Left ventricle myocardium superior (tissue), 1 donor: ENCODE measurements at regions of chr2 and their contacts with region 1.

Region 1: GRCh38 chr2:189096769-189097447 is 82.7 kb downstream of the COL5A2 start:
- DNase-seq: no peak
- ATAC-seq: no peak

Region 2: DNA sequence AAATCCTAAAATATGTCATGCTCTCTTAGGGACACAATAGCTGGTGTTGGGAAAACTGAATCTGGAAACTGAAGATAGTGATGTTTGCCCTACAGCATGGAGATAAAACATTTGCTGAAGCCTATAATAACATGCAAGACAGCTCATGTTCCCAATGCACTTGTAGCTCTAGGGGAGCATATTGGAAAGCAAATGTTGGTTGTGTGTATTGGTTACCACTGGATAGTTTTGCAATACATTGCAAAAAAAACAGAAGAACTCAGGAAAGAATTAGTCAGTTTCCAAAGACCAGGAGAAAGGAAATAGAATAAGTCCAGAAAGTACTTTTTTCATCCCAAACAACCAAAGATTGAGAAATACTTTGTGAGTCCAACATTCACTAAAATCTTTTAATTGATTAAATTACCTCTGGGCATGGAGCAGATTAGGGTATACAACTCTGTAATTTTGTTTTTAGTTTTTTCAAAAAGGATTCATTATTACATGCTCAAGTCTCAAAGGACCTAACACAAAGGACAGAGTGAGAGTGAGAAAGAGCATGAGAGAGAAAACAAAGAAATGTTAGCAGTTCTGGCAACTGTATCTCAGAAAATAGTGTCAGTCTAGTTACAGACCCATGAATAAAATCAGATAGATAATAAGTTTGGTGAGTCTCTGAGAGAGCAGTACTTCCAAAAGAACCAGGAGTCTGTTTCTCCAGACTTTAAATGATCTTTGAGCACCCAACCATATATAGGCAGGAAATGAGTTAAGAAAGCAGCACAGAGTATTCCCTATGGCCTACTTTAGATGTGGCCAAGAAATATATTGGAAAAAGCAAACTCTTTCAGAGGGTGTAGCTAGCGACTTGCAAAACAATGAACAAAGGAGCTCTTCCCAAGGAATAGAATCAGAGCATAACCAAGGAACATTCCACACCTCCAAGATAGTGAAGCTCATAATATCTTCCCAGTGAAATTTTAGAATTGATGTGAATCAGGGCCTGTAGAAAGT is 159.4 kb before region 1 on chr2:
- intact Hi-C with region 1: no loop called
- DNase-seq: no peak
- ATAC-seq: peak; percentile 86

Region 3: GRCh38 chr2:189164746-189165145 is 67.8 kb after region 1 on chr2:
- intact Hi-C with region 1: no loop called
- DNase-seq: no peak
- ATAC-seq: peak; percentile 79

Region 4: GRCh38 chr2:189204322-189204941 is 107.5 kb after region 1 on chr2:
- intact Hi-C with region 1: no loop called
- DNase-seq: no peak
- ATAC-seq: no peak

Region 5: GRCh38 chr2:189412330-189412953 is 315.5 kb after region 1 on chr2:
- intact Hi-C with region 1: loop called (anchors 10 kb)
- DNase-seq: no peak
- ATAC-seq: peak; percentile 71